ENCODE measurements at regions of chr2 and their contacts with region 1.

Region 1: GRCh38 chr2:37877457-37878315 is 47.4 kb upstream of the RMDN2 start:
- DNase-seq: peak; percentile 75
- H3K4me3 ChIP-seq: peak overlapping the region in 1 of 2 experiments; percentile 7; a peak in 1 of 4 replicates
- H3K27ac ChIP-seq: peak overlapping the region in 1 of 2 experiments; percentile 77; a peak in 2 of 4 replicates
- H3K4me1 ChIP-seq: peaks cover 0 to 23% of the 10 kb centered on the region in 2 experiments; a peak in 2 of 4 replicates
- H3K27me3 ChIP-seq: no peaks in the 10 kb centered on the region
- CTCF ChIP-seq: peak; percentile 91
- EP300 ChIP-seq: no peak; a peak in 1 of 4 replicates
- RAD21 ChIP-seq: peak; percentile 99

Region 2: GRCh38 chr2:37421686-37422085 is 456.0 kb before region 1 on chr2:
- CTCF ChIA-PET with region 1: interaction called, 540 read pairs
- POLR2A ChIA-PET with region 1: no interaction called
- DNase-seq: no peak
- H3K4me3 ChIP-seq: no peak overlapping the region
- H3K27ac ChIP-seq: no peak overlapping the region
- H3K4me1 ChIP-seq: peaks cover 0 to 5% of the 10 kb centered on the region in 2 experiments; a peak in 1 of 4 replicates
- H3K27me3 ChIP-seq: no peaks in the 10 kb centered on the region
- CTCF ChIP-seq: no peak
- EP300 ChIP-seq: no peak
- RAD21 ChIP-seq: no peak

Region 3: DNA sequence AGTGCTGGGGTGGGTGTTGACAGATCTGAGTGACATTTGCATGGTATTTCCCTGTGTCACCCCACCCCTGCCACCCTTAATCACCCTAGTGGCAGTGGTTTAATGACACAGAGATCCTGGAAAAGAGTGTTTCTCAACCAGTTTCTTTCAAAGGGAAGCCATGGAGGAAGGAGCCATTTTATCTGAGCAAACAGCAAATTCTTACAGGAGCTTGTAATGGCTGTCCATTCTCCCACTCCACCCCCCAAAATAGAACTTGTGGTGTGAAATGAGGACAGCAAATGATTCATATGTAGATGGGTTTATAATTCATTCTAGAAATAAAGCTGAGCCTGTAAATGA is 257.8 kb before region 1 on chr2:
- CTCF ChIA-PET with region 1: interaction called, 17 read pairs
- POLR2A ChIA-PET with region 1: no interaction called
- DNase-seq: no peak
- H3K4me3 ChIP-seq: no peak overlapping the region
- H3K27ac ChIP-seq: no peak overlapping the region
- H3K4me1 ChIP-seq: peaks cover 0 to 4% of the 10 kb centered on the region in 2 experiments; a peak in 1 of 4 replicates
- H3K27me3 ChIP-seq: no peaks in the 10 kb centered on the region
- CTCF ChIP-seq: no peak
- EP300 ChIP-seq: no peak
- RAD21 ChIP-seq: no peak

Region 4: DNA sequence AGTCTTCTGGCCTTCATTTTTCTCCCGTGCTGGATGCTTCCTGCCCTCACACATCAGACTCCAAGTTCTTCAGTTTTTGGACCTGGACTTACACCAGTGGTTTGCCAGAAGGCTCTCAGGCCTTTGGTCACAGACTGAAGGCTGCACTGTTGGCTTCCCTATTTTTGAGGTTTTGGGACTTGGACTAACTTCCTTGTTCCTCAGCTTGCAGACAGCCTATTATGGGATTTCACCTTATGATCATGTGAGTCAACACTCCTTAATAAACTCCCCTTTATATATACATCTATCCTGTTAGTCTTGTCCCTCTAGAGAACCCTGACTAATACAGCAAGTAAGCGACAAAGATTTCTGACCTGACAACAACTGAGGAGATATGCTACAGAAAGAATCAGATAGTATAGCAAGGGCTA is 213.4 kb before region 1 on chr2:
- CTCF ChIA-PET with region 1: interaction called, 43 read pairs
- POLR2A ChIA-PET with region 1: interaction called, 13 read pairs
- DNase-seq: no peak
- H3K4me3 ChIP-seq: no peak overlapping the region
- H3K27ac ChIP-seq: peak overlapping the region; percentile 30 to 34; a peak in 2 of 4 replicates
- H3K4me1 ChIP-seq: peaks cover 60 to 67% of the 10 kb centered on the region in 2 experiments
- H3K27me3 ChIP-seq: no peaks in the 10 kb centered on the region
- CTCF ChIP-seq: no peak
- EP300 ChIP-seq: no peak
- RAD21 ChIP-seq: no peak

Region 5: DNA sequence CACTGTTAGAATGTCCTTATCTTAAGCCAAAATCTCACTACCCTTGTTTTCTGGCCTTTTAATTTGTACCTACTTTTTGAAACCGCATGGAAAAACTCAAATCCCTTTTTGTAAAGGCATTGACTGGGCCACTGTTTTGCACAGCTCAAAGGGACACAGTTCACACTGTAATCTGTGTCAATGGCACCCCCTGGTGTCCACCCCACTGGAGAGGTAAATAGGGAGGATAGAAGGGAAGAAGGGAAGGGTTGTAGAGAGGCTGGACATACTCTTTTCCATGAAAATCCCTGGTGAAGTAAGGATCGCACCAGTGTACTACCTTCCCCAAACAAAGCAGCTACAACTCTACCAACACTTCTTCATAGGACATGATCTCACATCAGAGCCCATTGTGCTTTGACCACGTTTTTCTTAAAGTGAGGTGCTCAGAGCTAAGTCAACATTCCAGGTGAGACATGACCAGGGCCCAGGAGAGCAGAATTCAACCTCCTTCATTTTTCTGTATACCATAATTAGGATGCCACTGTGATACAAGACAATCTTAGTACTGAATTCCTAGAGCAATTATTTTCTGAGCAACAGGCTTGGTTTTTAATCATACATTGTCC is 45.0 kb before region 1 on chr2:
- CTCF ChIA-PET with region 1: interaction called, 247 read pairs
- POLR2A ChIA-PET with region 1: no interaction called
- DNase-seq: peak; percentile 81
- H3K4me3 ChIP-seq: no peak overlapping the region
- H3K27ac ChIP-seq: peak overlapping the region in 1 of 2 experiments; percentile 53; a peak in 2 of 4 replicates
- H3K4me1 ChIP-seq: peaks cover 14 to 21% of the 10 kb centered on the region in 2 experiments
- H3K27me3 ChIP-seq: no peaks in the 10 kb centered on the region
- CTCF ChIP-seq: peak; percentile 97
- EP300 ChIP-seq: peak in 1 of 2 experiments; percentile 18; a peak in 1 of 4 replicates
- RAD21 ChIP-seq: peak; percentile 99

Region 6: GRCh38 chr2:37896314-37896713 is 18.6 kb after region 1 on chr2:
- CTCF ChIA-PET with region 1: interaction called, 97 read pairs
- POLR2A ChIA-PET with region 1: no interaction called
- DNase-seq: peak; percentile 33
- H3K4me3 ChIP-seq: no peak overlapping the region
- H3K27ac ChIP-seq: no peak overlapping the region; a peak in 1 of 4 replicates
- H3K4me1 ChIP-seq: peaks cover 6% of the 10 kb centered on the region in 2 experiments; a peak in 3 of 4 replicates
- H3K27me3 ChIP-seq: no peaks in the 10 kb centered on the region
- CTCF ChIP-seq: peak; percentile 29; the same call in 1 of the 2 replicates
- EP300 ChIP-seq: no peak
- RAD21 ChIP-seq: peak; percentile 66

Measured in SK-N-SH (cell line).